GM10248 (cell line): ENCODE measurements at regions of chr1 and their contacts with region 1.

Region 1: GRCh38 chr1:87131809-87132283 is 196.8 kb upstream of the LMO4 start:
- DNase-seq: peak; percentile 87
- CTCF ChIP-seq: peak; percentile 96

Region 2: DNA sequence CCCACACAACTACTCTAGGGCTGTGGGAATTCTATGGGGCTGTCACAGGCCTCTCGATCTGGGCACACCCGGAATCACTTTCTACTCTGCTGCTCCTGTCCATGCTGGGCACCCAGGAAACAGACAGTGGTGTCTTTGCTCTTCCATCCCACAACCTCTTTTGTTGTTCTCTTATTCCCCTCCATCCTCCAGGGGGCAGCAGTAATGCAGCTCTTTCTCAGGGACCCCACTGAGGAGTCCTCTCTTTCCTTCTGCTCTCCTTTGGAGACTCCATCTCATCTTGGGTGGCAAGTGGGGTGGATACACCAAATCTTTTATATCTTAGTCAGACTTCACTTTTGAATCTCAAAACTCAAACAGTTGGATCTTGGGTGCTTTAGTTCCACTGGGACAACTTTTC is 11.1 kb before region 1 on chr1:
- CTCF ChIA-PET with region 1: interaction called, 38 read pairs
- POLR2A ChIA-PET with region 1: no interaction called
- DNase-seq: no peak
- CTCF ChIP-seq: peak; percentile 24

Region 3: GRCh38 chr1:87143413-87144135 is 11.7 kb after region 1 on chr1:
- CTCF ChIA-PET with region 1: interaction called, 15 read pairs
- POLR2A ChIA-PET with region 1: no interaction called
- DNase-seq: no peak
- CTCF ChIP-seq: no peak